CD8-positive, alpha-beta T cell (primary cell): ENCODE measurements at regions of chr6 and their contacts with region 1.

Region 1: GRCh38 chr6:75208298-75209183 is 2.7 kb upstream of the COL12A1 start:
- DNase-seq: peak; percentile 68 to 89 (median 82)
- ATAC-seq: peak; percentile 83
- H3K4me3 ChIP-seq: peak overlapping the region; percentile 4 to 28
- H3K4me3 Mint-ChIP-seq: peak overlapping the region; percentile 75
- H3K27ac ChIP-seq: no peak overlapping the region
- H3K27ac Mint-ChIP-seq: no peak overlapping the region
- H3K4me1 ChIP-seq: peaks cover 47% of the 10 kb centered on the region
- H3K4me1 Mint-ChIP-seq: peaks cover 52% of the 10 kb centered on the region
- H3K27me3 ChIP-seq: peaks cover 6 to 23% of the 10 kb centered on the region in 2 experiments
- H3K27me3 Mint-ChIP-seq: peaks cover 71% of the 10 kb centered on the region
- CTCF ChIP-seq: peak; percentile 70

Region 2: GRCh38 chr6:73675466-73676098 is 1533.0 kb before region 1 on chr6:
- CTCF ChIA-PET with region 1: interaction called, 10 read pairs
- POLR2A ChIA-PET with region 1: no interaction called
- intact Hi-C with region 1: loop called (anchors 1 kb)
- DNase-seq: peak; percentile 45 to 73 (median 69)
- ATAC-seq: peak; percentile 75
- H3K4me3 ChIP-seq: no peak overlapping the region
- H3K4me3 Mint-ChIP-seq: no peak overlapping the region
- H3K27ac ChIP-seq: no peak overlapping the region
- H3K27ac Mint-ChIP-seq: no peak overlapping the region
- H3K4me1 ChIP-seq: no peaks in the 10 kb centered on the region
- H3K4me1 Mint-ChIP-seq: no peaks in the 10 kb centered on the region
- H3K27me3 ChIP-seq: peaks cover 0 to 2% of the 10 kb centered on the region in 2 experiments
- H3K27me3 Mint-ChIP-seq: peaks cover 22% of the 10 kb centered on the region
- CTCF ChIP-seq: peak; percentile 90

Region 3: DNA sequence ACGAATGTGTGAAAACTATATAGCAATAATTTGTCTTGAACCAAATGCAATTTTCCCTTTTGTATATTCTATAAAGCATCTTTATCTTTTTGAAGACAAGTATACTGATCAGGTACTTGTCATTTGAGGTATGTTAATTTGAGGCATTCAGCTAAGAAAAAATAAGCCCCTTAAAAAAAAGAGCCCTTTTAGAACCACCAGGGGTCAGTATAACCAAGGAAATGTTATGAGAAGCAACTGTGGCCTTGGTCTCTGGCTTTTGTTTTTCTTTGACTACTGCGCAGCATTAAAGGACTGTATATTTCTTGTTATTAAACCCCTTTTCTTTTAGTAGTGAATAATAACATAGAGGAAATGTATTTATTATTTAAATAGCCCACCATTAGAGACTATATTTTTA is 1469.4 kb before region 1 on chr6:
- CTCF ChIA-PET with region 1: interaction called, 220 read pairs
- POLR2A ChIA-PET with region 1: no interaction called
- intact Hi-C with region 1: loop called (anchors 1 kb)
- DNase-seq: peak in 2 of 9 experiments; percentile 71 to 76
- ATAC-seq: peak; percentile 77
- H3K4me3 ChIP-seq: no peak overlapping the region
- H3K4me3 Mint-ChIP-seq: no peak overlapping the region
- H3K27ac ChIP-seq: no peak overlapping the region
- H3K27ac Mint-ChIP-seq: no peak overlapping the region
- H3K4me1 ChIP-seq: no peaks in the 10 kb centered on the region
- H3K4me1 Mint-ChIP-seq: no peaks in the 10 kb centered on the region
- H3K27me3 ChIP-seq: no peaks in the 10 kb centered on the region
- H3K27me3 Mint-ChIP-seq: no peaks in the 10 kb centered on the region
- CTCF ChIP-seq: peak; percentile 85

Region 4: GRCh38 chr6:73854998-73855718 is 1353.4 kb before region 1 on chr6:
- CTCF ChIA-PET with region 1: interaction called, 33 read pairs
- POLR2A ChIA-PET with region 1: no interaction called
- intact Hi-C with region 1: loop called in 1 of 2 experiments (anchors 1 kb)
- DNase-seq: peak in 3 of 9 experiments; percentile 27 to 61 (median 57)
- ATAC-seq: no peak
- H3K4me3 ChIP-seq: no peak overlapping the region
- H3K4me3 Mint-ChIP-seq: no peak overlapping the region
- H3K27ac ChIP-seq: no peak overlapping the region
- H3K27ac Mint-ChIP-seq: no peak overlapping the region
- H3K4me1 ChIP-seq: no peaks in the 10 kb centered on the region
- H3K4me1 Mint-ChIP-seq: no peaks in the 10 kb centered on the region
- H3K27me3 ChIP-seq: no peaks in the 10 kb centered on the region
- H3K27me3 Mint-ChIP-seq: no peaks in the 10 kb centered on the region
- CTCF ChIP-seq: peak; percentile 64

Region 5: GRCh38 chr6:75220357-75220756 is 11.8 kb after region 1 on chr6:
- CTCF ChIA-PET with region 1: interaction called, 21 read pairs
- POLR2A ChIA-PET with region 1: interaction called, 4 read pairs
- intact Hi-C with region 1: no loop called
- DNase-seq: no peak
- ATAC-seq: no peak
- H3K4me3 ChIP-seq: no peak overlapping the region
- H3K4me3 Mint-ChIP-seq: no peak overlapping the region
- H3K27ac ChIP-seq: no peak overlapping the region
- H3K27ac Mint-ChIP-seq: no peak overlapping the region
- H3K4me1 ChIP-seq: no peaks in the 10 kb centered on the region
- H3K4me1 Mint-ChIP-seq: no peaks in the 10 kb centered on the region
- H3K27me3 ChIP-seq: no peaks in the 10 kb centered on the region
- H3K27me3 Mint-ChIP-seq: peaks cover 41% of the 10 kb centered on the region
- CTCF ChIP-seq: no peak

Region 6: GRCh38 chr6:75243333-75244062 is 35.0 kb after region 1 on chr6 and contains the start of gene COX7A2:
- CTCF ChIA-PET with region 1: interaction called, 10 read pairs
- POLR2A ChIA-PET with region 1: no interaction called
- intact Hi-C with region 1: no loop called
- DNase-seq: peak; percentile 71 to 94 (median 87)
- ATAC-seq: peak; percentile 94
- H3K4me3 ChIP-seq: peak within 1 kb of the TSS; percentile 94 to 98
- H3K4me3 Mint-ChIP-seq: peak within 1 kb of the TSS; percentile 99
- H3K27ac ChIP-seq: peak within 1 kb of the TSS; percentile 93 to 97
- H3K27ac Mint-ChIP-seq: peak within 1 kb of the TSS; percentile 100
- H3K4me1 ChIP-seq: peaks cover 6% of the 10 kb centered on the region
- H3K4me1 Mint-ChIP-seq: peaks cover 36% of the 10 kb centered on the region
- H3K27me3 ChIP-seq: no peaks in the 10 kb centered on the region
- H3K27me3 Mint-ChIP-seq: peaks cover 6% of the 10 kb centered on the region
- CTCF ChIP-seq: no peak
- total RNA-seq, gene COX7A2: 221 to 229 TPM